ENCODE measurements at regions of chr3 and their contacts with region 1.

Region 1: GRCh38 chr3:112437146-112438022 is 61.9 kb downstream of the BTLA start:
- DNase-seq: no peak
- H3K4me3 ChIP-seq: no peak overlapping the region
- H3K27ac ChIP-seq: no peak overlapping the region
- H3K4me1 ChIP-seq: no peaks in the 10 kb centered on the region
- H3K27me3 ChIP-seq: no peaks in the 10 kb centered on the region
- CTCF ChIP-seq: peak in 2 of 3 experiments; percentile 6 to 11
- EP300 ChIP-seq: no peak
- POLR2A ChIP-seq: no peak

Region 2: DNA sequence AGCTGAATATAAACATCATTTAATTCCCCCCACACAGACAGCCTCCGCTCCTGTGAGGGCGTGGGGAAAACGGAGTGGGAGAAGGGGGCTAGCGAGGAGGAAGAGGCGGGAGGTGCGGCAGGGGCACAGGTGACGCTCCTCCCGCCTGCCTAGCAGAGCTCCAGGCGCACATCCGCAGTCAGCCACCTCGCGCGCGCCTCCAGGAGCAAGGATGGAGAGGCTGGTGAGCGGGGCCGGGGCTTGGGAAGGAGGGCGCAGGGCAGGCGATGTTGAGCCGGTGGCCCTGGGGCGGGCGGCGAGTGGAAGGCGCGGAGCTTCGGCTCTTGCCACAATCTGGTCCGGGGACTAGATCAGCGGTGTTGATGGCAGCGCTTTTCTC is 104.4 kb before region 1 on chr3 and contains the start of gene CD200:
- intact Hi-C with region 1: loop called (anchors 10 kb)
- DNase-seq: no peak
- H3K4me3 ChIP-seq: peak within 1 kb of the TSS; percentile 60 to 76 (median 64)
- H3K27ac ChIP-seq: peak within 1 kb of the TSS; percentile 80 to 84 (median 82)
- H3K4me1 ChIP-seq: peaks cover 0 to 20% (median 12%) of the 10 kb centered on the region in 4 donors
- H3K27me3 ChIP-seq: no peaks in the 10 kb centered on the region
- CTCF ChIP-seq: peak in 1 of 3 experiments; percentile 23
- EP300 ChIP-seq: no peak
- POLR2A ChIP-seq: no peak
- total RNA-seq, gene CD200: 7.2 to 22.9 (median 7.6) TPM

Measured in esophagus muscularis mucosa (tissue), 4 donors.